CD14-positive monocyte (primary cell): ENCODE measurements at regions of chr20 and their contacts with region 1.

Region 1: GRCh38 chr20:63955827-63956663 is at the start of gene UCKL1:
- DNase-seq: peak; percentile 83 to 84 (median 83)
- H3K4me3 ChIP-seq: peak within 1 kb of the TSS; percentile 75 to 93 (median 82)
- H3K4me3 Mint-ChIP-seq: peak within 1 kb of the TSS; percentile 79 to 85
- H3K27ac ChIP-seq: peak within 1 kb of the TSS in 1 of 2 donors; percentile 76
- H3K27ac Mint-ChIP-seq: peak within 1 kb of the TSS; percentile 11 to 90 (median 74)
- H3K4me1 ChIP-seq: peaks cover 24 to 39% of the 10 kb centered on the region in 2 donors
- H3K4me1 Mint-ChIP-seq: peaks cover 30% of the 10 kb centered on the region
- H3K27me3 ChIP-seq: no peaks in the 10 kb centered on the region
- H3K27me3 Mint-ChIP-seq: peaks cover 0 to 5% (median 2%) of the 10 kb centered on the region in 3 donors
- CTCF ChIP-seq: peak; percentile 38
- polyA plus RNA-seq, gene UCKL1: 10.9 to 65.8 (median 14.5) TPM

Region 2: DNA sequence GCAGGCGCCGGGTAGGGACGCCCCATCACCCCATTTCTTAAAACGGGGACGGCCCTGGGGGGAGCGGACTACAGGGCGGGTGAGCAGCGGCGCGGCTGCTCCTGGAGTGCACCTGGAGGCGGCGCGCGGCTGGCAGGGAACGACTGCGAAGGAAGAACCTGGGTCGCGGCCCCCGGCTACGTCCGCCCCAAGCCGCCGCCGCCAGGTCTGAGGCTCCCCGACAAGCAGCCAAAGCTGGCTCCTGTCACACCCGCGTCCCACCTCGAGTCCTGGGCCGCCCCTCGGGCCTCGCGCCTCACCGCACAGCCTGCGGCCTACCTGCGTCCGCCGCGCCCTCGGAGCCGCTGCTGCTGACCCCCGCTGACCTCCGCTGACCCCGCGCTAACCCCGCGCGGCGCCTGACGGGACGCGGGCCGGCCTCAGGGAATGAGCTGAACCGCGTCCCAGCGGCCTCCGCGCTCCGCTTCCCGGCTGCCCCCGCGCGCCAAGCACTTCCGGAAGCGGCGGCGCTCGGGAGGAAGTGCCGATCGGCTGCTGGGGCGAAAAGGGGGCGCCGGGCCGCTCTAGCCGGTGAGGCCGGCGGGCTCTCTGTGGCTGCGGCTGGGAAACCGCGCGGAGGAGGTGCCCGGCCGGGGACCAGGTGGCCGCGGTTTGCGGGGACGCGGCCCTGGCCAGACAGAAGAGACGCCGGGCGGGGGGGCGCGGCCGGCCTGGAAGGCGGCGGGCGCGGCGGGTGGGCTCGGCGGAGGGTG is 248.3 kb before region 1 on chr20 and contains the starts of genes ARFRP1 and ZGPAT:
- intact Hi-C with region 1: loop called in 1 of 2 experiments (anchors 5 kb)
- DNase-seq: peak; percentile 83 to 87 (median 86)
- H3K4me3 ChIP-seq: peak within 1 kb of the TSS; percentile 35 to 86 (median 71)
- H3K4me3 Mint-ChIP-seq: peak within 1 kb of the TSS; percentile 82 to 88
- H3K27ac ChIP-seq: peak within 1 kb of the TSS; percentile 41 to 81
- H3K27ac Mint-ChIP-seq: peak within 1 kb of the TSS; percentile 71 to 89 (median 82)
- H3K4me1 ChIP-seq: peaks cover 23 to 30% of the 10 kb centered on the region in 2 donors
- H3K4me1 Mint-ChIP-seq: peaks cover 34% of the 10 kb centered on the region
- H3K27me3 ChIP-seq: no peaks in the 10 kb centered on the region
- H3K27me3 Mint-ChIP-seq: peaks cover 0 to 3% (median 0%) of the 10 kb centered on the region in 3 donors
- CTCF ChIP-seq: no peak
- polyA plus RNA-seq, gene ARFRP1: 18.2 to 31.1 (median 20.7) TPM
- polyA plus RNA-seq, gene ZGPAT: 24.2 to 58.6 (median 28.3) TPM

Region 3: GRCh38 chr20:63894358-63895201 is 61.5 kb before region 1 on chr20 and contains the start of gene DNAJC5:
- intact Hi-C with region 1: loop called in 1 of 2 experiments (anchors 5 kb)
- DNase-seq: peak; percentile 95 to 96 (median 95)
- H3K4me3 ChIP-seq: peak within 1 kb of the TSS; percentile 80 to 96 (median 80)
- H3K4me3 Mint-ChIP-seq: peak within 1 kb of the TSS; percentile 92 to 95
- H3K27ac ChIP-seq: peak within 1 kb of the TSS; percentile 90 to 93
- H3K27ac Mint-ChIP-seq: peak within 1 kb of the TSS; percentile 96 to 99 (median 98)
- H3K4me1 ChIP-seq: peaks cover 52 to 60% of the 10 kb centered on the region in 2 donors
- H3K4me1 Mint-ChIP-seq: peaks cover 55% of the 10 kb centered on the region
- H3K27me3 ChIP-seq: no peaks in the 10 kb centered on the region
- H3K27me3 Mint-ChIP-seq: no peaks in the 10 kb centered on the region
- CTCF ChIP-seq: no peak
- polyA plus RNA-seq, gene DNAJC5: 5.9 to 44.4 (median 7.4) TPM

Region 4: DNA sequence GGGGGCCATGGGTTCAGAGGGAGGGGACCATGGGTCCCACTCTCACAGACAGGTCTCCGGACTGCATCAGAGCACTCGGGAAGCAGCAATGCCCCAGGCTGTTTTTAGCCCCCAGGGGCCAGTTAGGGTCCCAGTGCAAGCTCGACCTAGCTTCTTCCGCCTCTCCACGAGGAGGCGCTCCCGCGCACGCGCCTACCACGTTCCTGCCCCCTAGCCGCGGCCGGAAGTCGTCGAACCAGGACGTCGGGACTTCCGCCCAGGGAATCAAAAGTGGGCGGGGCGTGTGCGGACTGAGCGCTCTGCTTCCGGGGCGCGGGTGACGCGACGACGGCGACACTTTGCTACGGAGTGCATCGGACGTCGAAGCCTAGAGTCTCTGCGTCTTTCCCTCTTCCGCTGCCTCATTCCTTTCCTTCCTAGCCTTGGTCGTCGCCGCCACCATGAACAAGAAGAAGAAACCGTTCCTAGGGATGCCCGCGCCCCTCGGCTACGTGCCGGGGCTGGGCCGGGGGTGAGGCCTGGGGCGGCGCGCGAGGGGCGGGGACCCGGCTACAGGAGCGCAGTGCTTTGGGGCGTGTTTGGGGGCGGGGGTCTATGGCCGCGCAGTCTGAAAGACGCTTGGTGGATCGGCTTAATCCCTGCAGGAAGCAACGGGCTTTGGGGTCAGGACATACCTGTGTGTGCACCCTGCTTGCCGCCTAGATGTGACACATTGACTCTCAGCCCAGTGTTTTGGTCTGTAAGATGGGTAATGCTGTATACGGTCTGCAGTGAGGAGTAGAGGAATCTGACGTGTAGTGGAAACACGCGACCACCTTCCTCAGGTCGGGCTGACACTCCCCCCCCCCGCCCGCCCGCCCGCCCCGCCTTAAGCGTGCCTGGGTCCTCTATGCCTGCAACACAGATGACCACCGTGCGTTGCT is 25.0 kb after region 1 on chr20 and contains the start of gene PRPF6:
- intact Hi-C with region 1: loop called in 1 of 2 experiments (anchors 1 kb)
- DNase-seq: peak; percentile 96
- H3K4me3 ChIP-seq: peak within 1 kb of the TSS; percentile 65 to 83 (median 76)
- H3K4me3 Mint-ChIP-seq: peak within 1 kb of the TSS; percentile 83 to 92
- H3K27ac ChIP-seq: peak within 1 kb of the TSS; percentile 50 to 89
- H3K27ac Mint-ChIP-seq: peak within 1 kb of the TSS; percentile 82 to 95 (median 91)
- H3K4me1 ChIP-seq: peaks cover 32 to 48% of the 10 kb centered on the region in 2 donors
- H3K4me1 Mint-ChIP-seq: peaks cover 40% of the 10 kb centered on the region
- H3K27me3 ChIP-seq: peaks cover 0 to 5% of the 10 kb centered on the region in 2 donors
- H3K27me3 Mint-ChIP-seq: peaks cover 3 to 11% (median 10%) of the 10 kb centered on the region in 3 donors
- CTCF ChIP-seq: peak; percentile 86
- polyA plus RNA-seq, gene PRPF6: 29.1 to 47.7 (median 34.5) TPM

Region 5: GRCh38 chr20:64062596-64063388 is 106.7 kb after region 1 on chr20 and contains the start of gene TCEA2:
- intact Hi-C with region 1: loop called in 1 of 2 experiments (anchors 2 kb)
- DNase-seq: peak; percentile 87 to 90 (median 89)
- H3K4me3 ChIP-seq: peak within 1 kb of the TSS; percentile 65 to 82 (median 68)
- H3K4me3 Mint-ChIP-seq: peak within 1 kb of the TSS; percentile 82 to 87
- H3K27ac ChIP-seq: peak within 1 kb of the TSS in 1 of 2 donors; percentile 67
- H3K27ac Mint-ChIP-seq: peak within 1 kb of the TSS in 5 of 7 donors; percentile 18 to 81 (median 50)
- H3K4me1 ChIP-seq: peaks cover 32 to 53% of the 10 kb centered on the region in 2 donors
- H3K4me1 Mint-ChIP-seq: peaks cover 42% of the 10 kb centered on the region
- H3K27me3 ChIP-seq: no peaks in the 10 kb centered on the region
- H3K27me3 Mint-ChIP-seq: peaks cover 2 to 29% (median 20%) of the 10 kb centered on the region in 3 donors
- CTCF ChIP-seq: no peak
- polyA plus RNA-seq, gene TCEA2: 15.7 to 24.3 (median 16.0) TPM